PC-3 (cell line): ENCODE measurements at regions of chr4 and their contacts with region 1.

Region 1: DNA sequence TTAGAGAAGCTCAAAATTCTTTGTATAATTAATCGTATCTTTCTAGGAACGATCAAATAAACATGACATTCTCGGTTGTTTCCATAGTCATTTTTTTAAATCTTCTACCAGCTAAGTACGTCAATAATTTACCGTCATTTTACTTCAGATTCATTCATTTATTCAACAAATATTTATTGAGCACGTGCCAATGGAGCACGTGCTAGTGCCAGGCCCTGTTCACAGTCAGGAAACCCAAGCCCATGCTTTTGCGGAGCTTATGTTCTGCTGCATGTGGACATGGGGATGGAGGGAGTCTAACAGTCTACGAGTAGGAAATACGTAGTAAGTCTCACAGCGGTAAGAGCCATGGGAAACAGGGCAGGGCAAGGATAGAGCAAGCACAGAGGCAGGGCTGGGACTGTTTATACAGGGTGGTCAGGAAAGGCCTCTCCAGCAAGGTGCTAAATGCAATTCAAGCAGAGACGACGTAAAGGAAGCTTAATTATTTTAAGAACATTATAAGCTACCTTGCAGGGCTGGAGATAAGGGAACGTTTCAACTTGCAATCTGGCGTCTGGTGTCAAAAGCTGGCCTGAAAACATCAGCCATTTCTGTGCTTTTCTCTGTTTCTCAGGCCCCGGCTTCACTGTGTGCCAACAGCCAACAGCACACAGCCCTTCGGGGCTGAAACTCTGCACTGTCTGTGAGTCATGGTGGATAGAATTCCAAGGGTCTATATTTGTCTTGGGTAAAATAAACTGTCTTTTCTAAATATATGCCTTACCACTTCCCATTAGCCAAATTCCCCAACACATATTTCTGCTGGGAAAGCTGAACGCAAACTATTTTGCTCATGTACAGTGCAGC is 517.1 kb upstream of the ZFP42 start:
- DNase-seq: peak; percentile 82
- ATAC-seq: peak; percentile 75
- H3K4me3 ChIP-seq: peak overlapping the region; percentile 5; the same call in 1 of the 2 replicates
- H3K27ac ChIP-seq: peak overlapping the region; percentile 96
- H3K4me1 ChIP-seq: peaks cover 36% of the 10 kb centered on the region
- H3K27me3 ChIP-seq: no peaks in the 10 kb centered on the region
- CTCF ChIP-seq: no peak

Region 2: GRCh38 chr4:187209921-187210613 is 268.4 kb before region 1 on chr4:
- CTCF ChIA-PET with region 1: no interaction called
- POLR2A ChIA-PET with region 1: no interaction called
- intact Hi-C with region 1: loop called (anchors 1 kb)
- DNase-seq: peak; percentile 83
- ATAC-seq: peak; percentile 97
- H3K4me3 ChIP-seq: no peak overlapping the region
- H3K27ac ChIP-seq: peak overlapping the region; percentile 89
- H3K4me1 ChIP-seq: peaks cover 18% of the 10 kb centered on the region
- H3K27me3 ChIP-seq: no peaks in the 10 kb centered on the region
- CTCF ChIP-seq: no peak

Region 3: DNA sequence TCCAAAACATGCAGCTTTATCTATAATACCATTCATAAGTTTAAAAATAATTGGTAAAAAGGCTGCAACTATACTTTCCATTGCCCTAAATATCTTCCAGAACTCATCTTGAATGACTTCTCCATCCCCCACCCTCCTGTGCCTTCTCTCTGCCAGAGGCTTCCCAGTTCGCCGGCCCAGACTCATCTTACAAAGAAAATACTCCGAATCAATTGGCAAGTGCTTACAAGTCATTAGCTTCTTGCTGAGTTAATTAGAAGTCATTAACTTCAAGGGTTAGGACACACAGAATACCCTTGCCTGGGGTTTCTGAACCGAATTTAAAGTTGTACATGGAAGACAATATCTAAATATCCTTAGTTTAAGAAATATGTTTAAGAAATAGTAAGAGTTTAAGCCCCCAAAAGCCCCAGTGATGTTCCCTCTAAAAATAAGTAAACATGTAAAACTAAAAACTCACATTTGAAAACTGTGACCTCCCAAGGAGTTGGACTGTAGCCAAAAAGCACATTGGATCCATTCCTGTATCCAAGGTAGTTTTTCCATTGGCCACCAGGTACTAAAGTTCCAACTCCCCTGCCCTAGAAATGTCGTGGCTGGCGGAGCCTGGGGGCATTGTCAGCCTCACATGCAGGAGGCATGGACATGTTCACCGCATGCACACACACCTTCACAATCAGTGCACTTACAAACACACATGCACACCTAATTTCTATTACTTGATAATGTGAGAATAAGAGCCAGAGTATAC is 219.7 kb before region 1 on chr4:
- CTCF ChIA-PET with region 1: no interaction called
- POLR2A ChIA-PET with region 1: no interaction called
- intact Hi-C with region 1: loop called (anchors 2 kb)
- DNase-seq: no peak
- ATAC-seq: no peak
- H3K4me3 ChIP-seq: no peak overlapping the region
- H3K27ac ChIP-seq: no peak overlapping the region
- H3K4me1 ChIP-seq: peaks cover 9% of the 10 kb centered on the region
- H3K27me3 ChIP-seq: no peaks in the 10 kb centered on the region
- CTCF ChIP-seq: no peak

Region 4: GRCh38 chr4:187424636-187425035 is 53.9 kb before region 1 on chr4:
- CTCF ChIA-PET with region 1: no interaction called
- POLR2A ChIA-PET with region 1: no interaction called
- intact Hi-C with region 1: loop called (anchors 2 kb)
- DNase-seq: peak; percentile 56
- ATAC-seq: peak; percentile 89
- H3K4me3 ChIP-seq: no peak overlapping the region
- H3K27ac ChIP-seq: no peak overlapping the region
- H3K4me1 ChIP-seq: peaks cover 5% of the 10 kb centered on the region
- H3K27me3 ChIP-seq: no peaks in the 10 kb centered on the region
- CTCF ChIP-seq: no peak

Region 5: GRCh38 chr4:187464573-187464972 is 13.9 kb before region 1 on chr4:
- CTCF ChIA-PET with region 1: no interaction called
- POLR2A ChIA-PET with region 1: no interaction called
- intact Hi-C with region 1: no loop called
- DNase-seq: peak; percentile 4
- ATAC-seq: no peak
- H3K4me3 ChIP-seq: no peak overlapping the region
- H3K27ac ChIP-seq: no peak overlapping the region
- H3K4me1 ChIP-seq: no peaks in the 10 kb centered on the region
- H3K27me3 ChIP-seq: no peaks in the 10 kb centered on the region
- CTCF ChIP-seq: no peak

Region 6: DNA sequence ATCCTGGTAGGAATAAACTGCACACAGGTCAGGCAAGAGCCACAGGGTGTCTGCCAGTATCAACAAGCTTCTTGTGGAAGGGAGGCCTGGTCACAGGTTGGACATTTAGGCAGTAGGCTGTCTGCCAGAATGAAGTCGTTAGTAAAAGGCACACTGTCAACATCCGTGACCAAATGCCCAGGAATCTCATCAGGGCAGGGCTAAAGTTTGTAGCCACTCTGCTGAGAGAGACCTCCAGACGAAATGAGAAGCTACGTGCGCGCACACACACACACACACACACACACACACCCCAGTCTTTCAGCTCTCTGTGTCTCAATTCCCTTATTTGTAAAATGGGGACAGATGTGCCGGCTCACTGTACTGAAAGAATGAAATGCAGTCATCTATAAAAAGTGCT is 108.4 kb after region 1 on chr4:
- CTCF ChIA-PET with region 1: no interaction called
- POLR2A ChIA-PET with region 1: interaction called, 9 read pairs
- intact Hi-C with region 1: loop called (anchors 5 kb)
- DNase-seq: peak; percentile 84
- ATAC-seq: peak; percentile 88
- H3K4me3 ChIP-seq: peak overlapping the region; percentile 75
- H3K27ac ChIP-seq: peak overlapping the region; percentile 86
- H3K4me1 ChIP-seq: peaks cover 8% of the 10 kb centered on the region
- H3K27me3 ChIP-seq: no peaks in the 10 kb centered on the region
- CTCF ChIP-seq: no peak

Region 7: GRCh38 chr4:187814737-187815465 is 336.4 kb after region 1 on chr4:
- CTCF ChIA-PET with region 1: no interaction called
- POLR2A ChIA-PET with region 1: no interaction called
- intact Hi-C with region 1: no loop called
- DNase-seq: no peak
- ATAC-seq: no peak
- H3K4me3 ChIP-seq: no peak overlapping the region
- H3K27ac ChIP-seq: no peak overlapping the region
- H3K4me1 ChIP-seq: no peaks in the 10 kb centered on the region
- H3K27me3 ChIP-seq: no peaks in the 10 kb centered on the region
- CTCF ChIP-seq: no peak